Caco-2 (cell line): ENCODE measurements at regions of chr3 and their contacts with region 1.

Region 1: DNA sequence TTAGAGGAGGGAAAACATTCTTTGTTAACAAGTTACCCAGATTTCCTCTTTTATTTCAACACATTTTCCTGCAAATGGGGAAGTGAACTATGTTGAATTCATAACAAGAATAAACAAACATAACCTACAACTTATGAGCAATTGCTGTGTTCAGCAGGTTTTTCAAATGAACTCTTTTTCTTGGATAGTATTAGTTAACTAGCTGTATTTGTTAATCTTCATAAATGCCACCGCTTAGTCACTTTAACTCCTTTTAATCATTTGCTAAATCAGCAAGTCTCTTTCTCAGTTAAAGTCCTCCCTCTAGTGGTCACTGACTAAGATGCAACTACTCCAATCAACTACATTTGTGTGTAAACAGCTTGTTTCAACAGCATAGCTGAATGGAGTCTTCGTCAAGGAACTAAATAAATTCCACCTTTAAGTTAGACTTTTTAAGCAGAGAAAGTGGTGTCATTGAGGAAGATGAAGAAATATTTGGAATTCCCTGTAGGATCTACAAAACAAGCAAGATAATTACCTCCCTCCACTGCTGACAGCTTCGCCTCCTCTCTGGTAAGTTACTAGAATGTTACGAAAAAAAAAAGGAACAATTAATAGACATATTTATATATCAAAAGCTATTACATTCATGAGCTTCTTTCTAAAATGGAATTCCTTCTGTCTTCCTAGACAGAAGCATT is 1122.0 kb downstream of the ROBO1 start:
- DNase-seq: peak in 1 of 2 experiments; percentile 54
- H3K4me3 ChIP-seq: no peak overlapping the region
- H3K4me3 Mint-ChIP-seq: no peak overlapping the region
- H3K27ac Mint-ChIP-seq: no peak overlapping the region
- H3K4me1 ChIP-seq: no peaks in the 10 kb centered on the region
- H3K4me1 Mint-ChIP-seq: no peaks in the 10 kb centered on the region
- H3K27me3 ChIP-seq: no peaks in the 10 kb centered on the region
- H3K27me3 Mint-ChIP-seq: no peaks in the 10 kb centered on the region
- CTCF ChIP-seq: peak; percentile 68 to 73

Region 2: GRCh38 chr3:78221300-78221699 is 424.5 kb before region 1 on chr3:
- CTCF ChIA-PET with region 1: no interaction called
- POLR2A ChIA-PET with region 1: no interaction called
- intact Hi-C with region 1: loop called (anchors 1 kb)
- DNase-seq: peak in 1 of 2 experiments; percentile 4
- H3K4me3 ChIP-seq: no peak overlapping the region
- H3K4me3 Mint-ChIP-seq: no peak overlapping the region
- H3K27ac Mint-ChIP-seq: no peak overlapping the region
- H3K4me1 ChIP-seq: no peaks in the 10 kb centered on the region
- H3K4me1 Mint-ChIP-seq: no peaks in the 10 kb centered on the region
- H3K27me3 ChIP-seq: no peaks in the 10 kb centered on the region
- H3K27me3 Mint-ChIP-seq: peaks cover 2% of the 10 kb centered on the region
- CTCF ChIP-seq: no peak

Region 3: GRCh38 chr3:78274475-78275065 is 371.2 kb before region 1 on chr3:
- CTCF ChIA-PET with region 1: interaction called, 5 read pairs
- POLR2A ChIA-PET with region 1: no interaction called
- intact Hi-C with region 1: loop called (anchors 2 kb)
- DNase-seq: no peak
- H3K4me3 ChIP-seq: no peak overlapping the region
- H3K4me3 Mint-ChIP-seq: no peak overlapping the region
- H3K27ac Mint-ChIP-seq: no peak overlapping the region
- H3K4me1 ChIP-seq: no peaks in the 10 kb centered on the region
- H3K4me1 Mint-ChIP-seq: no peaks in the 10 kb centered on the region
- H3K27me3 ChIP-seq: no peaks in the 10 kb centered on the region
- H3K27me3 Mint-ChIP-seq: no peaks in the 10 kb centered on the region
- CTCF ChIP-seq: no peak

Region 4: GRCh38 chr3:78562328-78562727 is 83.4 kb before region 1 on chr3:
- CTCF ChIA-PET with region 1: no interaction called
- POLR2A ChIA-PET with region 1: no interaction called
- intact Hi-C with region 1: loop called (anchors 2 kb)
- DNase-seq: no peak
- H3K4me3 ChIP-seq: no peak overlapping the region
- H3K4me3 Mint-ChIP-seq: no peak overlapping the region
- H3K27ac Mint-ChIP-seq: no peak overlapping the region
- H3K4me1 ChIP-seq: no peaks in the 10 kb centered on the region
- H3K4me1 Mint-ChIP-seq: no peaks in the 10 kb centered on the region
- H3K27me3 ChIP-seq: no peaks in the 10 kb centered on the region
- H3K27me3 Mint-ChIP-seq: no peaks in the 10 kb centered on the region
- CTCF ChIP-seq: no peak